Right lobe of liver (tissue), 6 donors: ENCODE measurements at regions of chr16 and their contacts with region 1.

Region 1: GRCh38 chr16:11797166-11797956 is at the start of gene ZC3H7A:
- DNase-seq: peak; percentile 98 to 99 (median 99)
- ATAC-seq: peak; percentile 93 to 98 (median 96)
- H3K4me3 ChIP-seq: peak within 1 kb of the TSS; percentile 81 to 91 (median 82)
- H3K27ac ChIP-seq: peak within 1 kb of the TSS; percentile 96 to 98 (median 97)
- H3K4me1 ChIP-seq: peaks cover 0 to 52% (median 20%) of the 10 kb centered on the region in 4 donors
- H3K27me3 ChIP-seq: no peaks in the 10 kb centered on the region
- CTCF ChIP-seq: peak; percentile 77 to 99 (median 88)
- POLR2A ChIP-seq: peak; percentile 98
- total RNA-seq, gene ZC3H7A: 22.8 to 34.0 (median 26.9) TPM

Region 2: DNA sequence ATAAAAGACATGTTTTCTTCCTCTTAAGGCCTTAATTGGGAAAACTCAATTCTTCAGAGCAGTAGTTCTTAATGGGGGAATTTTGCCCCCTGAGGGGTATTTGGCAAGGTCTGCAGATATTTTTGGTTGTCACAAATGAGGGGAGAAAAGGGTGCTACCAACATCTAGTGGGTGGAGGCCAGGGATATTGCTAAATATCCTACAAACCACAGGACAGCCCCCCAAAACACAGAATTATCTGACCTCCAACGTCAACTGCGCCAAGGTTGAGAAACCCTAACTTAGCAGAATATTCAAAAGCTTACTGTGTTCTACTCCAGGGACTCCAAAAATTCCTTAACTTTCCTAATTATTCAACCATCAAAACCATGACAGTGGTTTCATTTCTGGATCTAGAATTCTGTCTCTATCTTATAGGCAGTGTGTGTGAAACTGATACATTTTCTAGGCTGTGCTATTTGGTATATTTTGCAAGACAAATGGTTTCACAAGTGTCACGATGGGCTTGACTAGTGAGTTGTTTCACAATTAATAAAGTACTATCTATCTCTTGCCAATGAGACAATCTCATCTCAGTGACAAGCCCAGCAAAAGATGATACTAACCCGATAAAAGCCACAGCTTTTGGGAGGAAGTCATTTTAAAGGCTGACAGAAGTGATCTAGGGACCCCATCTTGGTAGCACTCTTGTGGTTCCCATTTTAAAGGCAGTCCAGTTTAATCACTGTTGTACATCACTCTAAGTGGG is 69.4 kb before region 1 on chr16:
- intact Hi-C with region 1: loop called (anchors 10 kb)
- DNase-seq: no peak
- ATAC-seq: peak; percentile 20 to 51 (median 51)
- H3K4me3 ChIP-seq: no peak overlapping the region
- H3K27ac ChIP-seq: peak overlapping the region in 2 of 3 donors; percentile 46 to 68
- H3K4me1 ChIP-seq: peaks cover 0 to 73% (median 26%) of the 10 kb centered on the region in 4 donors
- H3K27me3 ChIP-seq: no peaks in the 10 kb centered on the region
- CTCF ChIP-seq: no peak
- POLR2A ChIP-seq: no peak

Region 3: DNA sequence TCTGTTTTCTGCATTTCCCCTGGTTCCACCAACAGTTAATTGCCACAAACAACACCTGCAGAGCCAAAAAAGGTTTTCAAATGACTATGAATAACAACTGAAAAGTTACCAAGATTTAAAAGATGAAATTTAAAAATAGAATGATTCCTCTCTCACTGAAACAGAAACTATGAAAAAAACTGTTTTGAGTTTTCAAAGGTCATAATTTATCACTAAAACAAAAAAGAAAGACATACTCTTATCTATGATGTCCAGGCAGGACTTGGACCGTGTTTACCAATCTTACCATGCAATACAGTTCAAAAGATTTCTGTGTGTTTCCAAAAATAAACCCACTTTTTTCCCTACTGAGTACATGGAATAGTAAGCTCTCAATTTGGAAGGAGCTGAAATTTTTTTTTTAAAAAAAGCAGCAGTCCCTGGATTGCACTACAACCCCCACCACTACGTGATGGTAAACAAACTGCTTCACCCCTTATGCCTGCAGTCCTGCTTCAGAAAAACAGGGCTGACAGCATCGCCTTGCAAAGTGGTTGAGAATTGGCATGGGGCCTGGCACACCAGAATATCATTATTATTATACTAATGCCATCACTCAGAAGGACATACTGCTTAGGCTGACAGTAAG is 63.2 kb before region 1 on chr16:
- intact Hi-C with region 1: loop called (anchors 10 kb)
- DNase-seq: no peak
- ATAC-seq: peak; percentile 69 to 77 (median 72)
- H3K4me3 ChIP-seq: no peak overlapping the region
- H3K27ac ChIP-seq: peak overlapping the region; percentile 15 to 81 (median 72)
- H3K4me1 ChIP-seq: peaks cover 0 to 73% (median 31%) of the 10 kb centered on the region in 4 donors
- H3K27me3 ChIP-seq: no peaks in the 10 kb centered on the region
- CTCF ChIP-seq: no peak
- POLR2A ChIP-seq: no peak

Region 4: GRCh38 chr16:11851294-11852091 is 54.1 kb after region 1 on chr16 and contains the start of gene RSL1D1:
- intact Hi-C with region 1: no loop called
- DNase-seq: peak; percentile 91 to 93 (median 93)
- ATAC-seq: peak; percentile 96 to 98 (median 98)
- H3K4me3 ChIP-seq: peak within 1 kb of the TSS; percentile 63 to 94 (median 87)
- H3K27ac ChIP-seq: peak within 1 kb of the TSS; percentile 71 to 87 (median 75)
- H3K4me1 ChIP-seq: peaks cover 0 to 21% (median 7%) of the 10 kb centered on the region in 4 donors
- H3K27me3 ChIP-seq: no peaks in the 10 kb centered on the region
- CTCF ChIP-seq: no peak
- POLR2A ChIP-seq: peak; percentile 90
- total RNA-seq, gene RSL1D1: 38.1 to 77.3 (median 54.9) TPM

Region 5: DNA sequence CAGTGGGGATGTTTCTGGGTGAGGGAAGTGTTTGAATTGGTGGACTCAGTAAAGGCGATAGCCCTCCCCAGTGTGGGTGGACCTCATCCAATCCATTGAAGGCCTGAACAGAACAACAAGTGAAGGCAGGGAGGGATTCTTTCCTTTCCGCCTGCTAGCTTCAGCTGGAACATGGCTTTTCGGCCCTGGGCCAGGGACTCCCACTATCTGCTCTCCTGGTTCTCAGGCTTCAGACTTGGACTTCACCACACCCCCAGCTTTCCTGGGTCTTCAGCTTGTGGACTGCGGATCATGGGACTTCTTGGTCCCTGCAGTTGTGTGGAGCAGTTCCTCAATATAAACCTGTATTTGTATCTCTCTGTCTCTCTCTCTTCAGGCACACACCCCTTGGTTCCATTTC is 257.0 kb after region 1 on chr16:
- intact Hi-C with region 1: no loop called
- DNase-seq: no peak
- ATAC-seq: peak in 1 of 4 donors; percentile 59
- H3K4me3 ChIP-seq: no peak overlapping the region
- H3K27ac ChIP-seq: no peak overlapping the region
- H3K4me1 ChIP-seq: no peaks in the 10 kb centered on the region
- H3K27me3 ChIP-seq: no peaks in the 10 kb centered on the region
- CTCF ChIP-seq: no peak
- POLR2A ChIP-seq: no peak